Gastrocnemius medialis (tissue), 4 donors: ENCODE measurements at regions of chr16 and their contacts with region 1.

Region 1: DNA sequence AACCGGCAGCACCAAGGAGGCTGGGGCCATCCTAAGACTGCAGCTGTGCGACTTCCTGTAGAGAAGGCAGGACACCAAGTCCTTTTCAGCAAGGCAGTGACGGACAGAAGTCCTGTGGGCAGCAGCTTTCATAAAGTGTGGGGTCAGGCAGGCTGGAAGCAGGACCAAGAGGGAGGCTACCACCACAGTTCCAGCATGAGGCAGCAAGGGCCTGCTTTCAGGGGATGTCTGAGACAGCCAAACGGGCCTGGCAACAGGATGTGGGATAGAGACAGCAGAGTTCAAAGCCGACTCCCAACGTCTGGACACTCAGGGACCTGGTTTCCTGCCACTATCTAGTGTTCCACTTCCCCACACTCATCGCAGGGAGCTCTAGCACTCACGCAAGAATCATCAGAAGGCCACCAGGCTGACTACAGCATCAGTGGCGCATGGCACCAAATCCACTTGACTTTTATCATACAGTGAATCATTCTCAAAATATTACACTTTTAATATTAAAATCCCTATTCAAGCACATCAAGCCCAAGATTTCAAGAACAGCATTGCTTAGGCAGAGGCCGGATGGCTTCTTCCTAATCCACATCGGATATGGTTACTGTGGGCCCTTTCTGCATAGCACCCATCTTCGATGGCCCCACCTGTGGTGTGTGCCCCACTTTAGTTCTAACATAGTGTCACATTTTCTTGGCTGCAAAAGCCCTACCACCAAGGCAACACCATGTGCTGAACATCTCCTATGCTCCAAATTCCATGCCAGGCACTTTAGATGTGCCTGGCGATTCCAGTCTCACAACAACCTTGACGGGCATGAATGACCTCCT is 5.2 kb downstream of the USP7 start:
- DNase-seq: peak; percentile 29 to 66
- ATAC-seq: peak; percentile 58 to 70
- H3K4me3 ChIP-seq: peak overlapping the region in 3 of 4 donors; percentile 7 to 35 (median 29)
- H3K27ac ChIP-seq: peak overlapping the region; percentile 69 to 82 (median 77)
- H3K4me1 ChIP-seq: peaks cover 74 to 79% of the 10 kb centered on the region in 2 donors
- H3K27me3 ChIP-seq: no peaks in the 10 kb centered on the region
- CTCF ChIP-seq: no peak
- POLR2A ChIP-seq: peak; percentile 13 to 20

Region 2: DNA sequence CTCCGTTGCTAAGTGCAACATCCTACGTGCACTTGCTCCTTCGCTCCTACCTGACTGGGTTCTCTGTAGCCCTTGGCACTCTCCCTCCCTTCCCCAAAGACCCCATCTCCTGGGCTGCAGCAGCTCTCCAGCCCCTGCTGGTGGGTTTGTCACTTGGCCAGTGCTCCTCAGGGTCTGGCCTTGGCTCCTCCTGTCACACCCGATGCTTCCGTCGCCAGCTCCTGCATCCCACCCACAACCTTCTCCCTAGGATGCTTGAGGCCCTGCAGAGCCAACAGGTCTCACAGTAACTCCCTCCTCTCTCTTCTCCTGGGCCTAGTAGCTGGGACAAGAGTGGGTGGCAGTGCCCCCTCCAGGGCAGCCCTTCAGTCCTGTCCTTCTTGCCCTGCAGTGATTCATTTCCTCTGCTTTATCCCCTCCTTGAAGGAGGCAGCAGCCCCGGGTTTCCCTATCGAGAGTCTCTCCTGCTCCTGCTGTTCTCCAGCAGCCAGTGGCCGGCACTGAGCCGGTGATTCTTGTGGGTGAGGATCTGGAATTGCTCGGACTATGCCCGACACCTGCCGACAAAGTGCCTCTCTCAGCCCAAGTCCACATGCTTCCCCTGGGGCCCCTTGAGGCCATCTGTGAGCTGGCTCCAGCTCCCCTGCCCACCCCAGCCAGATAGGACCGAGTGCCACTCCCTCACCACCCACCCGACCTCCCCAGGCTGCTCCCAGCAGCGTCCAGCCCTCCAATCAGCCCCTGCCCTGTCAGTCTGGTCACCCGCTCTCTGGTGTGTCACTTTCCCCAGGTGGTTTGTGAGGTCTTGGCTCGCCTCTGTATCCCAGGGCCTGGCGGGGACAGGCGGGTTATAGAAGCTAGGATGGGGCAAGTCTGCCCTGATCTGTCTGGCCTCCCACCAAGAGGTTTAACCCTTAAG is 72.6 kb before region 1 on chr16:
- in situ Hi-C with region 1: no loop called
- intact Hi-C with region 1: loop called (anchors 5 kb)
- DNase-seq: peak in 1 of 2 donors; percentile 78
- ATAC-seq: peak in 1 of 2 donors; percentile 40
- H3K4me3 ChIP-seq: no peak overlapping the region
- H3K27ac ChIP-seq: peak overlapping the region; percentile 8 to 81 (median 40)
- H3K4me1 ChIP-seq: peaks cover 11 to 36% of the 10 kb centered on the region in 2 donors
- H3K27me3 ChIP-seq: peaks cover 0 to 8% (median 7%) of the 10 kb centered on the region in 3 donors
- CTCF ChIP-seq: no peak
- POLR2A ChIP-seq: peak; percentile 44 to 47

Region 3: GRCh38 chr16:8905168-8905762 is 53.3 kb before region 1 on chr16:
- in situ Hi-C with region 1: loop called in 1 of 4 experiments (anchors 10 kb)
- intact Hi-C with region 1: no loop called
- DNase-seq: no peak
- ATAC-seq: no peak
- H3K4me3 ChIP-seq: no peak overlapping the region
- H3K27ac ChIP-seq: peak overlapping the region in 2 of 4 donors; percentile 72 to 75
- H3K4me1 ChIP-seq: peaks cover 0 to 4% of the 10 kb centered on the region in 2 donors
- H3K27me3 ChIP-seq: no peaks in the 10 kb centered on the region
- CTCF ChIP-seq: no peak
- POLR2A ChIP-seq: no peak

Region 4: DNA sequence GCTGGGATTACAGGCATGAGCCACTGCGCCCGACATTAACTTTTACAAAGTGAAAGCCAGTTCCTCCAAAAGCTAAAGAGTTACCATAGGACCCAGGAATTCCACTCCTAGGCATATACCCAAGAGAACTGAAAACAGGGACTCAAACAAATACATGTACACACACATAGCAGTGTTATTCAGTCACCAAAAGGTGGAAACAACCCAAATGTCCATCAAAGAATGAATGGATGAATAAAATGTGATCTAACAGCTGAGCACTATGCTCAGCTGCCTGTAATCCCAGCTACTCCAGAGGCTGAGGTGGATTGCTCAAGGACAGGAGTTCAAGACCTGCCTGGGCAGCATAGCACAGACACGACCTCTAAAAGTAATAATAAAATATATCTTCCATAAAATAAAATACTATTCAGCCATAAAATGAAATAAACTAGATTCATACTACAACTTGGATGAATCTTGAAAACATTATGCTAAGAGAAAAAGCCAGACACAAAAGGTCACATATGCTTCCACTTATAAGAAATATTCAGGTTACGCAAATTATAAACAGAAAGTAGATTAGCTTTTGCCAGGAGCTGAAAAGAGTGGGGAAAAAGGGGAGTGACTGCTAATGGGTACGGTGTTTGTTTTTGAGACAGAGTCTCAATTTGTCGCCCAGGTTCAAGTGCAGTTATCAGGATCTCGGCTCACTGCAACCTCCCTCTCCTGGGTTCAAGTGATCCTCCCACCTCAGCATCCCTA is 14.5 kb after region 1 on chr16:
- in situ Hi-C with region 1: no loop called
- intact Hi-C with region 1: no loop called
- DNase-seq: no peak
- ATAC-seq: no peak
- H3K4me3 ChIP-seq: no peak overlapping the region
- H3K27ac ChIP-seq: no peak overlapping the region
- H3K4me1 ChIP-seq: no peaks in the 10 kb centered on the region
- H3K27me3 ChIP-seq: peaks cover 0 to 3% (median 0%) of the 10 kb centered on the region in 3 donors
- CTCF ChIP-seq: no peak
- POLR2A ChIP-seq: no peak